Activated naive CD4-positive, alpha-beta T cell treated with anti-CD3 and anti-CD28 coated beads for 36 hours (primary cell): ENCODE measurements at regions of chr13 and their contacts with region 1.

Region 1: GRCh38 chr13:25762795-25763377 is 288.9 kb downstream of the SHISA2 start:
- DNase-seq: peak; percentile 35
- H3K4me3 Mint-ChIP-seq: no peak overlapping the region
- H3K27ac Mint-ChIP-seq: peak overlapping the region; percentile 41
- H3K4me1 Mint-ChIP-seq: peaks cover 25% of the 10 kb centered on the region
- H3K27me3 Mint-ChIP-seq: no peaks in the 10 kb centered on the region

Region 2: GRCh38 chr13:25806264-25806974 is 43.5 kb after region 1 on chr13:
- CTCF ChIA-PET with region 1: no interaction called
- intact Hi-C with region 1: loop called (anchors 1 kb)
- DNase-seq: peak; percentile 7
- H3K4me3 Mint-ChIP-seq: no peak overlapping the region
- H3K27ac Mint-ChIP-seq: peak overlapping the region; percentile 50
- H3K4me1 Mint-ChIP-seq: peaks cover 12% of the 10 kb centered on the region
- H3K27me3 Mint-ChIP-seq: peaks cover 18% of the 10 kb centered on the region

Region 3: DNA sequence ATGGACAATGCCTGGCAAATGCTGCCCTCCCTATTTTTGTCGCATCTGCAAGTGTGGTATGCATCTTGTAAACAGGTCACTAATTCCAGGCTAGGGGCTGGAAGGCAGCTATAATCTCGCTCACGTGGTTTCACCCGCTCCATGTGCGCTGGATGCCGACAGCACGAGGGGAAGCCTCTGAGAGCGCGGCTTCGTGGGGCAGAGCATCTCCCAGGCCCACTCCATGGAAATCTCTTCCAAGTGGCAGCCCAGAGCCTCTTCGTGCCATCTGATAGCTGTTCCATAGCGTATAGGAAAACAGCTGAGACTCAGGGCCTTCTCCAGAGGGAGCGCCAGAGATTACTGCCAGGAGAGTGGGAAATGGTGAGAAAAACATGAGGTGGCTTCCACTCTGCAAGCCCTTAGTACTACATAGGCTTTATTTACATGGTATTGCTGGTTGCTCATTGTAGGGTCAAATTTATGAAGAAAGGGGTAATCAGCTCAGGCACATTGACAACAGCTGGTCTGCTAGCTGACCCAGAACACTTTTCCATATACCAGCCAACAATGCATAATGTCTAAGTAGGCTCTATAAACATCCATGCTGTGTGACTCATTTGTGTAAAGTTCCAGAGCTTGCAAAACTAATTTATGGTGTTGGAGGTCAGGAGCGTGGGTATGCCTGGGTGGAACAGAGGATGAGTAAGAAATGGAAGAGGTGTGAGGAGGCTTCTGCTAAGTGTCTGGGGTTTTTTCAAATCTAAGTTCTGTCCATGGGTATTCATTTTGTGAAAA is 123.7 kb after region 1 on chr13:
- CTCF ChIA-PET with region 1: no interaction called
- intact Hi-C with region 1: loop called (anchors 5 kb)
- DNase-seq: peak; percentile 51
- H3K4me3 Mint-ChIP-seq: no peak overlapping the region
- H3K27ac Mint-ChIP-seq: peak overlapping the region; percentile 16
- H3K4me1 Mint-ChIP-seq: peaks cover 66% of the 10 kb centered on the region
- H3K27me3 Mint-ChIP-seq: no peaks in the 10 kb centered on the region

Region 4: GRCh38 chr13:26386031-26386430 is 623.1 kb after region 1 on chr13:
- CTCF ChIA-PET with region 1: no interaction called
- intact Hi-C with region 1: no loop called
- DNase-seq: no peak
- H3K4me3 Mint-ChIP-seq: no peak overlapping the region
- H3K27ac Mint-ChIP-seq: no peak overlapping the region
- H3K4me1 Mint-ChIP-seq: no peaks in the 10 kb centered on the region
- H3K27me3 Mint-ChIP-seq: no peaks in the 10 kb centered on the region

Region 5: DNA sequence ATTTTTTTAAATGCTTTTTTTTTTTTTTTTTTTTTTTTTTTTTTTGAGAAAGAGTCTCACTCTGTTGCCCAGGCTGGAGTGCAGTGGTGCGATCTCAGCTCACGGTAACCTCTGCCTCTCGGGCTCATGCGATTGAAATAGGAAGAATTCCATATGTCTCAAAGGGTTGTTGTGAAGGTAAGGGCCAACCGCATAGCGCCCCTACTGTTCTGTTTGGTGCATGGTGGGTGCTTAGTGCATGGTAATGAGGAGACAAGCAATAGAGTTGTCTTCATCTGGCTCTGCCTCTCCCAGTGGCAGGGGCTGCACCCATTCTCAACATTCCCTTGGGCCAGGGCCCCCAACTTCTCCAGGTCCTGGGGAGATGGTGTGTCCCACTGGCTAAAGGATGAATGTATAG is 1576.4 kb after region 1 on chr13:
- CTCF ChIA-PET with region 1: no interaction called
- intact Hi-C with region 1: no loop called
- DNase-seq: peak; percentile 65
- H3K4me3 Mint-ChIP-seq: no peak overlapping the region
- H3K27ac Mint-ChIP-seq: no peak overlapping the region
- H3K4me1 Mint-ChIP-seq: peaks cover 2% of the 10 kb centered on the region
- H3K27me3 Mint-ChIP-seq: no peaks in the 10 kb centered on the region